Motor neuron (in vitro differentiated cells): ENCODE measurements at regions of chr18 and their contacts with region 1.

Region 1: GRCh38 chr18:24118750-24119577 is 19.9 kb upstream of the CABYR start:
- ATAC-seq: peak; percentile 30 to 72 (median 46)
- H3K4me3 ChIP-seq: no peak overlapping the region
- H3K27ac ChIP-seq: no peak overlapping the region
- H3K4me1 ChIP-seq: no peaks in the 10 kb centered on the region

Region 2: DNA sequence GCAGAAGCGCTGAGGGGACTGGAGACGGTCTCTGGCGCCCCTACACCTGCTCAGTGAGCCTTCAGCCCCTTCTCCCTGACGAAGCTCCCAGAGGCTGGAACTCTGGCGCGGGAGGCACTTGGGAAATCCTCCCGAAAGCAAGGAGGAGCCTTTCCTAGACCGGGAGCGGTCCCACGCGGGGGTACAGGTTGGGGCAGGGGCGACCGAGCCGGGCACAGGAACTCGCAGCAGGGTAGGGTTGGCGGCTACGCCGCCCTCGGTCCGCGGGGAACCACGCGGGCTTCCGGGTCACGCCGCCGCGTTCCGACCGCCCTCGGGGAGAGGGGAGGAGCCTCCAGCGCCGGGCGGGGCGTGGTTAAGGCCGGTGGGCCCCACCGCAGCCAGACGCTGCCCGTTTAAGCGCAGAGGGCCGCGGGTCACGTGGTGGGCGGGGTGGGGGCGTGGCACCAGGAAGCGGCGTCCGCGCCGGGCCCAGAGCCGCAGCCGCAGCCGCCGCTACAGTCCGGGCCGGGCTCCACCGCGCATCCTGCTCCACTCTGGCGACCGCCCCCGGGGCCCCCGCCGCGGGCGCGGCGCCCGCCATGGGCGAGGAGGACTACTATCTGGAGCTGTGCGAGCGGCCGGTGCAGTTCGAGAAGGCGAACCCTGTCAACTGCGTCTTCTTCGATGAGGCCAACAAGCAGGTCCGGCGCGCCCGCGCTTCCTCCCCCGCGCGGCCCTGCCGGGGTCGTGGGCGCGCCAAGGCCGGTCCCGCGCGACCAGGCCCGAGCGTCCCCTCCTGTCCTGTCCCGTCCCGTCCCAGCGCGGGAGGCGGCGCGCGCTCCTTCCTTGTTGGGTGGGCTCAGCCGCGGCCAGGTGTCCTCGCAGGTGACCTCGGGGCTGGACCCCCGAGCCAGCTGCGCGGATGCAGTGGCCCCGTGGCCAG is 615.7 kb before region 1 on chr18 and contains the start of gene RMC1:
- in situ Hi-C with region 1: loop called in 1 of 9 experiments (anchors 25 kb)
- ATAC-seq: peak; percentile 84 to 95 (median 94)
- H3K4me3 ChIP-seq: peak within 1 kb of the TSS; percentile 61 to 88 (median 86)
- H3K27ac ChIP-seq: peak within 1 kb of the TSS; percentile 67 to 69
- H3K4me1 ChIP-seq: peaks cover 0 to 10% of the 10 kb centered on the region in 2 donors
- total RNA-seq, gene RMC1: 13.7 to 48.2 (median 23.4) TPM

Region 3: GRCh38 chr18:23586249-23587196 is 532.4 kb before region 1 on chr18 and contains the start of gene NPC1:
- in situ Hi-C with region 1: no loop called
- ATAC-seq: peak; percentile 85 to 96 (median 92)
- H3K4me3 ChIP-seq: peak within 1 kb of the TSS; percentile 60 to 87 (median 82)
- H3K27ac ChIP-seq: peak within 1 kb of the TSS; percentile 84 to 93
- H3K4me1 ChIP-seq: peaks cover 7 to 20% of the 10 kb centered on the region in 2 donors
- total RNA-seq, gene NPC1: 16.3 to 56.3 (median 25.4) TPM

Region 4: GRCh38 chr18:23861805-23862470 is 257.0 kb before region 1 on chr18:
- in situ Hi-C with region 1: no loop called
- ATAC-seq: peak; percentile 36 to 92 (median 71)
- H3K4me3 ChIP-seq: no peak overlapping the region
- H3K27ac ChIP-seq: peak overlapping the region in 1 of 2 donors; percentile 61
- H3K4me1 ChIP-seq: peaks cover 6 to 19% of the 10 kb centered on the region in 2 donors

Region 5: GRCh38 chr18:23958036-23958435 is 160.9 kb before region 1 on chr18:
- in situ Hi-C with region 1: loop called in 1 of 9 experiments (anchors 10 kb)
- ATAC-seq: no peak
- H3K4me3 ChIP-seq: no peak overlapping the region
- H3K27ac ChIP-seq: no peak overlapping the region
- H3K4me1 ChIP-seq: no peaks in the 10 kb centered on the region

Region 6: GRCh38 chr18:24754572-24754971 is 635.6 kb after region 1 on chr18:
- in situ Hi-C with region 1: no loop called
- ATAC-seq: peak in 2 of 8 experiments; percentile 72 to 87
- H3K4me3 ChIP-seq: no peak overlapping the region
- H3K27ac ChIP-seq: no peak overlapping the region
- H3K4me1 ChIP-seq: peaks cover 0 to 7% of the 10 kb centered on the region in 2 donors